CD14-positive monocyte (primary cell): ENCODE measurements at regions of chr18 and their contacts with region 1.

Region 1: DNA sequence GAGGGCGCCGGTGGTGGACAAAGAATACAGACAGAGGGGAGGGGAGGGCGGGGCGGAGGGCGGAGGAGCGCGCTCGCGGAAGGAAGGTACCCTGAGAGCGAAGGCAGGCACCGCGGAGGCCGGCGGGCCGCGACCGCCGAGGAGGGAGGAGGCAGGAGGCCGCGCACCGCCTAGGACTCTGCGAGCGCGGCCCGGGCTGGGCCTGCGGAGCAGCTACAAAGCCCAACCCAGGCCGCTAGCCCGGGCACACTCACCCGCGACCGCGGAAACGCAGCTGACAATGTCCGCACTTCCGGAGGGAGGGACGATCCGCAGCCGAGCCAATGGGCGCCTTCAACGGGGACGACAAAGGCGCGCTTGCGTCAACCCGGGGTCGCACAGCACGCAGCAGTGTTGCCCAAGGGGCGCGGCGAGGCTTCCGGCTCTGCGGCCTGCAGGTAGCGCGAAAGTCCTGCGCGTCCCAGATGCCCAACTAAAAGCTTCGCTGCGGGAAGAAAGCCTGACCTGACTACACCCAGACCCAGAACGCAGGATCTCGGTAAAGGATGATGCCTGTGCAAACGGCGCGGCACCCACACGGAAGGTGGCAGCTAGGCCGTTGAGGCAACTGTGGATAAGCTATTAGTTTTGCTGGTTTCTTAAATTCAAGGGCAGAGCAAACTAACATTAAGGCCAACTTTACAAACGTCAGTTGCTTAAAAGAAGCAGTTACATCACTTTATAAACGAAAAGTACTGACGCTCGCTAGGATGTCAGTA is at the start of gene C18orf32:
- DNase-seq: peak; percentile 90 to 93 (median 90)
- H3K4me3 ChIP-seq: peak within 1 kb of the TSS; percentile 66 to 93 (median 91)
- H3K4me3 Mint-ChIP-seq: peak within 1 kb of the TSS; percentile 97 to 98
- H3K27ac ChIP-seq: peak within 1 kb of the TSS; percentile 87 to 94
- H3K27ac Mint-ChIP-seq: peak within 1 kb of the TSS; percentile 96 to 100 (median 99)
- H3K4me1 ChIP-seq: peaks cover 31 to 39% of the 10 kb centered on the region in 2 donors
- H3K4me1 Mint-ChIP-seq: peaks cover 39% of the 10 kb centered on the region
- H3K27me3 ChIP-seq: no peaks in the 10 kb centered on the region
- H3K27me3 Mint-ChIP-seq: no peaks in the 10 kb centered on the region
- CTCF ChIP-seq: no peak
- polyA plus RNA-seq, gene C18orf32: 27.5 to 134 (median 115) TPM

Region 2: GRCh38 chr18:48715711-48716361 is 771.3 kb before region 1 on chr18:
- intact Hi-C with region 1: loop called in 1 of 2 experiments (anchors 5 kb)
- DNase-seq: peak; percentile 94 to 96 (median 94)
- H3K4me3 ChIP-seq: peak overlapping the region in 1 of 3 experiments; percentile 45
- H3K4me3 Mint-ChIP-seq: peak overlapping the region; percentile 50 to 75
- H3K27ac ChIP-seq: peak overlapping the region; percentile 96 to 98
- H3K27ac Mint-ChIP-seq: peak overlapping the region; percentile 98 to 99 (median 99)
- H3K4me1 ChIP-seq: peaks cover 35 to 36% of the 10 kb centered on the region in 2 donors
- H3K4me1 Mint-ChIP-seq: peaks cover 46% of the 10 kb centered on the region
- H3K27me3 ChIP-seq: no peaks in the 10 kb centered on the region
- H3K27me3 Mint-ChIP-seq: peaks cover 0 to 2% (median 0%) of the 10 kb centered on the region in 3 donors
- CTCF ChIP-seq: no peak

Region 3: DNA sequence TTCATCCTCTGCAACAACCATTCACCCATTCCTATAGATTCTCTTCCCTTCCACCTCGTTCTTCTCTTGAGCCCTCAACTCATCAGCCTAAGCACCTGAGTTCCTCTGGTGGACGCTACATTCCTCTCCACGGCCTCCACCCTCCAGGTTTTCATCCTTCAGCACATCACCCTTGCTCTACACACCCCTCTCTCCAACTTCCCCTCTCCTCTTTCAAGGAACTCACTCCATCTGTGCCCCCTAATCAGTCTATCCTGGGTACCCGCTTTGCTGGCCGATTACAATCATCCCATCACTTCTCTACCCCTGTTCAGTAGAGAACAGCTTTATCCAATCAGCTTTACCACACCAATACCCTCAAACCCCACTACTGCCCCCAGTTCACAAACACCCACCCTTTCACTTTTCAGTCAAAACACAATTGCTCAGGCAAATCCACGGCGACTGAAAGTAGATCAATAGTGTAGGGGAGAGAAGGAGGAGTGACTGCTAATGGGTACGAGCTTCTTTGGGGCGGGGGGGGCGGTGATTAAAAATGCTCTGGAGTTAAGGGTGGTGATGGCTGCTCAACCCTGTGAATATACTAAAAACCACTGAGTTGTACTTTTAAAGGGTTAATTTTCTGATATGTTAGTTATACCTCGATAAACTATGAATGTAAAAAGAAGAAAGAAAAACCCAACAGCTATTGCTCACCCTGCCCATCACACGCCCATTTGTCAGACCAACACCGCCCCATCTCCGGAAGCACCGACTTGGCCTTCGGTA is 27.5 kb before region 1 on chr18:
- intact Hi-C with region 1: loop called (anchors 1 to 2 kb)
- DNase-seq: peak; percentile 29 to 58 (median 40)
- H3K4me3 ChIP-seq: peak overlapping the region; percentile 66 to 98 (median 74)
- H3K4me3 Mint-ChIP-seq: peak overlapping the region; percentile 85 to 94
- H3K27ac ChIP-seq: peak overlapping the region in 1 of 2 donors; percentile 92
- H3K27ac Mint-ChIP-seq: peak overlapping the region; percentile 44 to 86 (median 70)
- H3K4me1 ChIP-seq: peaks cover 17 to 25% of the 10 kb centered on the region in 2 donors
- H3K4me1 Mint-ChIP-seq: peaks cover 24% of the 10 kb centered on the region
- H3K27me3 ChIP-seq: no peaks in the 10 kb centered on the region
- H3K27me3 Mint-ChIP-seq: peaks cover 0 to 2% (median 1%) of the 10 kb centered on the region in 3 donors
- CTCF ChIP-seq: no peak

Region 4: GRCh38 chr18:49813319-49814146 is 326.4 kb after region 1 on chr18 and contains the start of gene ACAA2:
- intact Hi-C with region 1: loop called (anchors 5 kb)
- DNase-seq: peak; percentile 93
- H3K4me3 ChIP-seq: peak within 1 kb of the TSS; percentile 85 to 91 (median 86)
- H3K4me3 Mint-ChIP-seq: peak within 1 kb of the TSS; percentile 93 to 97
- H3K27ac ChIP-seq: peak within 1 kb of the TSS; percentile 98 to 99
- H3K27ac Mint-ChIP-seq: peak within 1 kb of the TSS; percentile 92 to 97 (median 96)
- H3K4me1 ChIP-seq: peaks cover 20 to 26% of the 10 kb centered on the region in 2 donors
- H3K4me1 Mint-ChIP-seq: peaks cover 35% of the 10 kb centered on the region
- H3K27me3 ChIP-seq: no peaks in the 10 kb centered on the region
- H3K27me3 Mint-ChIP-seq: peaks cover 0 to 3% (median 0%) of the 10 kb centered on the region in 3 donors
- CTCF ChIP-seq: no peak
- polyA plus RNA-seq, gene ACAA2: 20.8 to 109 (median 97.6) TPM

Region 5: GRCh38 chr18:50287441-50288347 is 800.6 kb after region 1 on chr18 and contains the start of gene CXXC1:
- intact Hi-C with region 1: loop called (anchors 5 to 10 kb)
- DNase-seq: peak; percentile 99 to 100 (median 99)
- H3K4me3 ChIP-seq: peak within 1 kb of the TSS; percentile 84 to 99 (median 98)
- H3K4me3 Mint-ChIP-seq: peak within 1 kb of the TSS; percentile 100
- H3K27ac ChIP-seq: peak within 1 kb of the TSS; percentile 60 to 84
- H3K27ac Mint-ChIP-seq: peak within 1 kb of the TSS; percentile 92 to 98 (median 97)
- H3K4me1 ChIP-seq: peaks cover 25 to 49% of the 10 kb centered on the region in 2 donors
- H3K4me1 Mint-ChIP-seq: peaks cover 42% of the 10 kb centered on the region
- H3K27me3 ChIP-seq: no peaks in the 10 kb centered on the region
- H3K27me3 Mint-ChIP-seq: peaks cover 0 to 2% (median 0%) of the 10 kb centered on the region in 3 donors
- CTCF ChIP-seq: peak; percentile 46
- polyA plus RNA-seq, gene CXXC1: 30.9 to 227 (median 33.4) TPM

Region 6: DNA sequence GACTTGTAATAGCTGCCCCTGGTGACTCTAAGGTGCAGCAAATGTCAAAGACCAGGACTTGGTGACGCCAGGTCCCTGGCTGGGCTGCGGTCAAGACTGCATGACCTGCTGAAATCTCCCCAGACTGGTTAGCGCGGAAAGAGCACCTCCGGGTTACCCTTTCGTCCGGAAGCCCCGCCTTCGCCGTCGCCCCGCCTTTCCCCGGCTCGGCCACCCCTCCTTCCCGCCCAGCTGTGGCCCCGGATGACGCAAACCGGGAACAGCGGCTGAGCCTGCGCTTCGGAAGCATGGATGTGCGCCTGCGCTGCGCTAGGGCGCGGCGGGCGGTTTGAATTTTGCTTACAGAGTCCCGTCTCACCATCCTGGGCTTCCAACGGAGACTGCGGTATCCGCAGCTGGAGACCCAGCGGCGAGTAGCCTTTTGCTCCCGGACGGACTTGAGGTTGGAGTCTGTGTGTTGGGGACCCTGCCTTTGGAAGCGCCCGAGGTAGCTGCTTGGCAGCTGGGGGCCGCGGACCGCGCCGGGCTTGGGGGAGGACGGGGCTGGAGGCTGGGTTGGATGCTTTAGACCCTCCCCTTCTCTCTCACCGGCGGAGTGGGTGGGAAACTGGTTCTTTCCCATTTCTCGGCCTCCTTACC is 887.7 kb after region 1 on chr18 and contains the start of gene SKA1:
- intact Hi-C with region 1: loop called in 1 of 2 experiments (anchors 10 kb)
- DNase-seq: peak; percentile 93 to 95 (median 94)
- H3K4me3 ChIP-seq: peak within 1 kb of the TSS; percentile 10 to 87 (median 57)
- H3K4me3 Mint-ChIP-seq: peak within 1 kb of the TSS; percentile 66 to 84
- H3K27ac ChIP-seq: peak within 1 kb of the TSS; percentile 60 to 84
- H3K27ac Mint-ChIP-seq: peak within 1 kb of the TSS; percentile 88 to 95 (median 92)
- H3K4me1 ChIP-seq: peaks cover 12 to 17% of the 10 kb centered on the region in 2 donors
- H3K4me1 Mint-ChIP-seq: peaks cover 12% of the 10 kb centered on the region
- H3K27me3 ChIP-seq: peaks cover 0 to 4% of the 10 kb centered on the region in 2 donors
- H3K27me3 Mint-ChIP-seq: peaks cover 0 to 7% (median 3%) of the 10 kb centered on the region in 3 donors
- CTCF ChIP-seq: no peak
- polyA plus RNA-seq, gene SKA1: 0.17 TPM in 1 of 3 donors, not detected in the others